A549 (cell line): ENCODE measurements at regions of chr5 and their contacts with region 1.

Region 1: GRCh38 chr5:58460732-58461286 is 923 bp upstream of the PLK2 start:
- DNase-seq: peak; percentile 72 to 92
- ATAC-seq: peak; percentile 67 to 79
- H3K4me3 ChIP-seq: peak overlapping the region; percentile 91
- H3K27ac ChIP-seq: peak overlapping the region; percentile 96 to 100
- H3K4me1 ChIP-seq: peaks cover 17% of the 10 kb centered on the region
- CTCF ChIP-seq: peak; percentile 72
- EP300 ChIP-seq: no peak
- POLR2A ChIP-seq: 0 out of 2 replicates have a peak, but pooled peaks have one; percentile 15
- RAD21 ChIP-seq: peak; percentile 96 to 97

Region 2: DNA sequence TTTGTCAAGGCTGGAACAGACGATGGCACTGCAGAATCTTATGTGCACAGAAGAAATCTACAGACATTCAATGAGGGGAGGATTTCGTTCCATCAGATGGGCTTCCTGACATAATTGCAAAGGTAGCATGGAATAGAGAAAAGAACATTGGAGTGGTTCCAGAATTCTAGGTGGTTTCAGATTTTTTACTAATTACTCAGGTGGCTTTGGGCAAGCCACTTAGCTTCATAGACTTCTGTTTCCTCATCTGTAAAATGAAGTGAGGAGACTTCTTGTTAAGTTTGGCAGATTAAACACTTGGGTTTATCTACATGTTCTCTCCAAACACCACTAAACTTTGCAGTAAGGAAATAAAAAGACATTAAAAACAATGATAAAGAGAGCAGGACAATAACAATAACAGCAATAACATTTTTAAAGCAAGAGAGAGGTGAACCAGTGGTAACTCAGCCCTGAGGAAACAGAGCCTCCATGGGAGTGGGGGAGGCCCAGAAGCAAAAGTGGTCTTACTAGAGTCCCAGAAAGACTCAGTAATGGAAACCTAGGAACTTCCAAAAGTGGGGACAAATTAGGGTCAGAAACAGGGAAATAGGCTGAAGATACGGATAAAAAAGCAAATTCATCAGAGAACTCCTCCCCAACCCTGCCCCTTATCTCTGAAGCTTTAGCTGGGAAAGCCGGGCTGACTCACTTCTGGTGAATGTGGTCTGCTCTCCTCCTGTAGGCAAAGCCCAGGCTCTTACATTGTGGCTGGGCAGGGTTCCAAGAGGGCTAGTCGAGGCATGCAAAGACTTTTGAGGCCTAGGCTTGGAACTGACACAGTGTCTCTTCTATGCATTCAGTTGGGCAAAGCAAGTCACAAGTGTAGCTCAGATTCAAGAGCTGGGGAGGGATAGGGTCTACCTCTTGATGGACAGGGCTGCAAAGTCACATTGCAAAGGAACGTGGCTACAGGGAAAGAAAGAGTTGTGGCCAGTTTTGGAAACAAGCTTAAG is 966.4 kb before region 1 on chr5:
- CTCF ChIA-PET with region 1: interaction called, 87 read pairs
- POLR2A ChIA-PET with region 1: interaction called, 16 read pairs
- DNase-seq: peak; percentile 54 to 71
- ATAC-seq: peak; percentile 81 to 95; a peak in 5 of 6 replicates
- H3K4me3 ChIP-seq: no peak overlapping the region
- H3K27ac ChIP-seq: peak overlapping the region; percentile 74 to 88
- H3K4me1 ChIP-seq: peaks cover 21% of the 10 kb centered on the region
- CTCF ChIP-seq: no peak
- EP300 ChIP-seq: no peak; a peak in 1 of 5 replicates
- POLR2A ChIP-seq: no peak
- RAD21 ChIP-seq: peak; percentile 20 to 31; a peak in 1 of 5 replicates

Region 3: DNA sequence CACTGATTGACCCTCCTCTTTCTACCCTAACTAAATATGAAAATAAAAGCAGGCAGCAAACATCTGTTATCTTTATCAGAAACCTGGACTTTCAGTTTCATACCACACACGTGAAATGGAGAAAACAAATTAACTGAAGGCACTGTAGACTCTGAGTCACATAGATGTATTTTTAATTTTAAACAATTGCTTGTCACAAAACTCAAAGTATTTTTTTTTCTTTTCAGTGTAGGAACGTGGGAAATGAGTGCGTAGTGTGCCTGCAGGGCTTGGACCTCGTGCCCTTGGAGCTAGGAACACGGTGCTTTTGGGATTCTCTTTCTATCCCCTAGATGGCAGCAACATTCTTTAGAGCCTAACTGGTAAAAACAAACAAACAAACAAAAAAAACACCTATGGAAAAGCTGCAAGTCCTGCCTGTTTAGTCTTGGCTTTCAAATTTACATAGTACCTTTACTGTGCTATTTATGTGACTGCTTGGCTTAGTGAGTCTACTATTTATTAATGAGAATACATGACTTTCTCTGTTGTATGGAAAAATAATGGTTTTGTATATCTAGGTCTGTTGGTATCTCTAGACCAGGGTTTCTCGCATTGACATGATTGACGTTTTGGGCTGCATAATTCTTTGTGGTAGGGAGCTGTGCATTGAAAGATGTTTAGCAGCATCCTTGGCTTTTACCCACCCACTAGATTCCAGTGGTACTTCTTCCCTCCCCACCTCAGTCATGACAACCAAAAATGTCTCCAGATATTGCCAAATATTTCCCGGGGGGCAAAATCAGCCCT is 961.4 kb before region 1 on chr5:
- CTCF ChIA-PET with region 1: interaction called, 87 read pairs
- POLR2A ChIA-PET with region 1: interaction called, 16 read pairs
- DNase-seq: peak; percentile 47 to 74
- ATAC-seq: peak; percentile 85; a peak in 5 of 6 replicates
- H3K4me3 ChIP-seq: peak overlapping the region; percentile 23; the same call in 1 of the 3 replicates
- H3K27ac ChIP-seq: peak overlapping the region; percentile 57 to 66
- H3K4me1 ChIP-seq: peaks cover 21% of the 10 kb centered on the region
- CTCF ChIP-seq: peak; percentile 92
- EP300 ChIP-seq: no peak
- POLR2A ChIP-seq: no peak
- RAD21 ChIP-seq: peak; percentile 96

Region 4: GRCh38 chr5:57887851-57888621 is 572.8 kb before region 1 on chr5:
- CTCF ChIA-PET with region 1: interaction called, 147 read pairs
- POLR2A ChIA-PET with region 1: interaction called, 49 read pairs
- DNase-seq: peak; percentile 70 to 85
- ATAC-seq: peak; percentile 95 to 97
- H3K4me3 ChIP-seq: no peak overlapping the region
- H3K27ac ChIP-seq: peak overlapping the region; percentile 71 to 86
- H3K4me1 ChIP-seq: peaks cover 36% of the 10 kb centered on the region
- CTCF ChIP-seq: peak; percentile 80
- EP300 ChIP-seq: no peak
- POLR2A ChIP-seq: no peak
- RAD21 ChIP-seq: peak; percentile 94 to 97

Region 5: GRCh38 chr5:58188262-58188651 is 272.6 kb before region 1 on chr5:
- CTCF ChIA-PET with region 1: interaction called, 25 read pairs
- POLR2A ChIA-PET with region 1: interaction called, 58 read pairs
- DNase-seq: peak; percentile 73 to 98
- ATAC-seq: peak; percentile 96
- H3K4me3 ChIP-seq: no peak overlapping the region
- H3K27ac ChIP-seq: peak overlapping the region; percentile 91 to 97
- H3K4me1 ChIP-seq: peaks cover 85% of the 10 kb centered on the region
- CTCF ChIP-seq: peak; percentile 33; the same call in 2 of the 3 replicates
- EP300 ChIP-seq: peak; percentile 97 to 99
- POLR2A ChIP-seq: no peak
- RAD21 ChIP-seq: peak; percentile 74 to 87

Region 6: GRCh38 chr5:58259685-58260152 is 201.1 kb before region 1 on chr5:
- CTCF ChIA-PET with region 1: interaction called, 9 read pairs
- POLR2A ChIA-PET with region 1: interaction called, 24 read pairs
- DNase-seq: peak; percentile 86 to 96
- ATAC-seq: peak; percentile 99
- H3K4me3 ChIP-seq: peak overlapping the region; percentile 17; the same call in 1 of the 3 replicates
- H3K27ac ChIP-seq: peak overlapping the region; percentile 85 to 91
- H3K4me1 ChIP-seq: peaks cover 36% of the 10 kb centered on the region
- CTCF ChIP-seq: no peak
- EP300 ChIP-seq: peak; percentile 68 to 91; a peak in 3 of 5 replicates
- POLR2A ChIP-seq: no peak
- RAD21 ChIP-seq: peak; percentile 29 to 46

Region 7: DNA sequence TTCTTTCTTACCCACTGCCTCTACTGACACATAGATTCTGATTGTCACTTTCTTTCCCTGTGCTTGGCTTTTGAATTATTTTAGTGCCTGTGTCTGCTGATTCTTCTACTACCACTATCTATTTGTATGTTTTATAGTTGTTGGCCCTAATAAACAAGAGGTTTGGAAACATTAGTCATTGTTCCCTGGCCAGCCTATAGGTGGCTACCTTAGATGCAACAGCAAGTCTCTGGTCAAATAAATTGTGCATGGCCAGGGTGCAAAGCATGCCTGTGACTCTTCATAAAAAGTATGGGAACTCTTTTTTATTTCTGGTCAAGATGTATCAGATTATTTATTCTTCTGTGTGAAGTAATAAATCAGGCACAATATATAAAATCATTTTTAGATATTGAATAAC is 125.3 kb before region 1 on chr5:
- CTCF ChIA-PET with region 1: no interaction called
- POLR2A ChIA-PET with region 1: no interaction called
- DNase-seq: peak in 1 of 2 experiments; percentile 40
- ATAC-seq: peak in 1 of 2 experiments; percentile 45; a peak in 2 of 6 replicates
- H3K4me3 ChIP-seq: no peak overlapping the region
- H3K27ac ChIP-seq: no peak overlapping the region
- H3K4me1 ChIP-seq: no peaks in the 10 kb centered on the region
- CTCF ChIP-seq: peak; percentile 25; the same call in 2 of the 3 replicates
- EP300 ChIP-seq: no peak
- POLR2A ChIP-seq: no peak
- RAD21 ChIP-seq: peak in 1 of 2 experiments; percentile 25; a peak in 1 of 5 replicates

Region 8: DNA sequence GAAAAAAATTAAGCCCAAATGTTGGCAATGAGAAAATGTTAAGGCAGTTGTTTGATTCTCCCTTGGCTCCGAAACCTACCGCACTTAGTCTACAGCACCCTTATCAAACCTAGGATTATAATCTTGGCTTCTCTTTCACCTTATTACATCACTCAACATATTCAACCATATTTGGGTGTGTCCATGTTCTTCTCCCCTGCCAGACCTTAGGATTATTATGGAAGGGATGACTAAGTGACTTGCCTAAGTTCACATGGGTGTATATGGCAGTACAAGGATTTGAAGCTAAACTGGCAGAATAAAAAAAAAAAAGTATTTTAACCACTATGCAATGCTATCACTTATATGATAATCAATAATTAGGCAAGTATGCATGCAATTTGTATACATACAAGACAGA is 77.3 kb before region 1 on chr5:
- CTCF ChIA-PET with region 1: no interaction called
- POLR2A ChIA-PET with region 1: no interaction called
- DNase-seq: no peak
- ATAC-seq: no peak
- H3K4me3 ChIP-seq: no peak overlapping the region
- H3K27ac ChIP-seq: no peak overlapping the region
- H3K4me1 ChIP-seq: no peaks in the 10 kb centered on the region
- CTCF ChIP-seq: no peak
- EP300 ChIP-seq: no peak
- POLR2A ChIP-seq: no peak
- RAD21 ChIP-seq: no peak

Region 9: GRCh38 chr5:58447226-58447625 is 13.6 kb before region 1 on chr5:
- CTCF ChIA-PET with region 1: interaction called, 21 read pairs
- POLR2A ChIA-PET with region 1: interaction called, 7 read pairs
- DNase-seq: no peak
- ATAC-seq: peak in 1 of 2 experiments; percentile 3; a peak in 2 of 6 replicates
- H3K4me3 ChIP-seq: no peak overlapping the region
- H3K27ac ChIP-seq: peak overlapping the region in 1 of 2 experiments; percentile 43; a peak in 1 of 6 replicates
- H3K4me1 ChIP-seq: peaks cover 3% of the 10 kb centered on the region; the same call in 2 of the 3 replicates
- CTCF ChIP-seq: no peak
- EP300 ChIP-seq: no peak
- POLR2A ChIP-seq: no peak
- RAD21 ChIP-seq: no peak

Region 10: DNA sequence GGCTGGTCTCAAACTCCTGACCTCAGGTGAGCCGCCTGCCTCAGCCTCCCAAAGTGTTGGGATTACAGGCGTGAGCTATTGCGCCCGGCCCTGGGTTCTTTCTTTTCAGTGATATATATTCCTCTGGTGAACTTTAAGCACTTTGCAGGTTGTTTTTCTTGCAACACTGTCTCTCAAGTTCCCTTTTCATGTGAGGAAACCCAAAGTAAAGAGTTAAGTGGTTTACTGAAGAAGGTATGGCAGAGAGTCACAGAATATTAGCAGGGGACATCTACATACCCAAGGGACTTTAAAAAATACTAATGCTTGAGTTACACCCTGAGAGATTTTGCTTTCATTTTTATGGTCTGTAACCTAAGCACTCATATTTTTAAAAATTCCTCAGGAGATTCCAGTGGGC is 23.7 kb after region 1 on chr5:
- CTCF ChIA-PET with region 1: no interaction called
- POLR2A ChIA-PET with region 1: no interaction called
- DNase-seq: no peak
- ATAC-seq: no peak
- H3K4me3 ChIP-seq: no peak overlapping the region
- H3K27ac ChIP-seq: no peak overlapping the region
- H3K4me1 ChIP-seq: no peaks in the 10 kb centered on the region
- CTCF ChIP-seq: no peak
- EP300 ChIP-seq: no peak
- POLR2A ChIP-seq: no peak
- RAD21 ChIP-seq: no peak

Region 11: GRCh38 chr5:58545912-58546311 is 85.1 kb after region 1 on chr5:
- CTCF ChIA-PET with region 1: no interaction called
- POLR2A ChIA-PET with region 1: no interaction called
- DNase-seq: peak; percentile 10
- ATAC-seq: no peak
- H3K4me3 ChIP-seq: no peak overlapping the region
- H3K27ac ChIP-seq: no peak overlapping the region
- H3K4me1 ChIP-seq: peaks cover 12% of the 10 kb centered on the region; the same call in 1 of the 3 replicates
- CTCF ChIP-seq: no peak
- EP300 ChIP-seq: no peak
- POLR2A ChIP-seq: no peak
- RAD21 ChIP-seq: no peak